GM18951 (cell line): ENCODE measurements at regions of chr15 and their contacts with region 1.

Region 1: GRCh38 chr15:51982013-51982769 is 10.6 kb upstream of the LEO1 start:
- POLR2A ChIP-seq: peak; percentile 37

Region 2: DNA sequence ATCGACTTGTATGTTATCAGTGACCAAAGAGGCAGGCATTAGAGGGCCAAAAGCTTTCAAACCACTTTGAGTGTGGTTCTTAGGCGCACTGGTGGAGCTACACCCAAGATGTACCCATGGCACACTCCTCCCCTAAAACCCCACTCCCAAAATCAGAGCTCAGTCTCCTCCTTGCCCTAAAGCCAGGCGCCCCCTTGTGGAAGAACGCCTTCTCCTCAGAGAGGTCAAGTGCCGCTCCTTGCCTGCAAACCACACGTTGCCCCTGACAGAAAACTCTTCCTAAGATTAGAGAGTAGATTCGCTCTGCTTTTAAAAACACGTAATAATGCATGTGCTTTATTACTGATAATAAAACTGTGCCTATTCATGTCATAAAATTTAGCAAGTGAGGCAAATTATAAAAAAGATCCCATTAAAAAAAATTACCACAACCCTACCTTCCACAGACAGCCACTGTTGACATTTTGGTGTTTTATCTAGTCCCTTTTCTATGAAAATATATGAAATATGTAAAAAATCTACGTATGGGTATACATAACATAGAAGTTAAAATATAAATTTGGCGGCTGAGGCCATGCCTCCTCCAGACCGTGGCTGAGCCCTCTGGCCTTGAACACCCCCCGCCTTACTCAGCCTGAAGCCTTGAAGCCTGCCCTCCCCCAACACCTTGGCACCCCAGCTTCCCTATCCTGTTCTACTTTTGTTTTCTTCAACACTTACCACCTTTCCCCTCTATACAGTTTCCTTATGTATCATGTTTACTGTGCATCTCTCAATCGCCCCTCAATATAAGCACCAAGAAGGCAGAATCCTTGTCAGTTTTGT is 96.9 kb after region 1 on chr15:
- in situ Hi-C with region 1: loop called (anchors 25 kb)
- POLR2A ChIP-seq: no peak